ENCODE measurements at regions of chr17 and their contacts with region 1.

Region 1: DNA sequence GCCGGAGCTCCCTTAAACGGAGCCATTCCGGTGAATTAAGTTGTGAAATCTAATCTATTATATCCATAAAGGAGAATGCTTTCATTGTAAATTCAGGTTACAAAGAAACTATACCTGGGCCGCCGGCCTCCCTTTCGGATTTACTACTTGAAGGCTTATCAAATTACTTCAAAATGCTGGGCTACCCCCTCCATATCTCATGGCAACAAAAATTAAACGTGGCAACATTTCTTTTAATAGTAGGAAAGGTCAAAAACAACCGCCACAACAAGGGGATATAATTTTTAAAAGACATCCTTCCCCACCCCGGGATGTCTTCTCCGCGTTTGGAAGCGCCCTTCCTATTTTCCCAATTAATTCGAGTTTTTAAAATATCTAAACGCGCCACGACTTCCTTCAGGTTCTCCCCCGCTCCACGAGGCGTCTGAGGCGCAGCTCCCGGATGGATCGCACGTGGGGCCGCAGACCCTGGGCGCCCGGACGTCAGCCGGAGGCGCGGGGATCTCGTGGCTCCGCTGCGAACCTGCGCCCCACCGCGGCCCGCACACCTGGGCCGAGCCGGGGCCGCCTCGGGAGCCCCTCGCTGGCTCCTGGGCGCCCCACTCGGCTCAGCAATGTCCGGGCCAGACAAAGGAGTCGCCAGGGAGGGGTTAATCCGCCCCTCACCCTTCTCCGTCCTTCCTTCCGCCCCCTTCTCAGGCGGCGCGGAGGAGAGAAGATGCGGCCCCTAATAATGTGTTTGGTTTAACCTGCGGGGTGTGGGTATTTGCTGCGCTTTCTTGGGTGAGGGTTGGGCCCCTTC is 47.4 kb upstream of the SLC38A10 start:
- DNase-seq: peak in 1 of 2 experiments; percentile 69
- H3K4me3 ChIP-seq: peak overlapping the region; percentile 71 to 84 (median 71)
- H3K27ac ChIP-seq: no peak overlapping the region
- H3K4me1 ChIP-seq: peaks cover 0 to 46% (median 22%) of the 10 kb centered on the region in 4 experiments; a peak in 6 of 7 replicates
- H3K27me3 ChIP-seq: peaks cover 36 to 73% (median 62%) of the 10 kb centered on the region in 4 experiments
- CTCF ChIP-seq: 0 out of 4 replicates have a peak, but pooled peaks of 1 of the 3 experiments have one; percentile 3
- EP300 ChIP-seq: no peak
- POLR2A ChIP-seq: no peak
- RAD21 ChIP-seq: no peak

Region 2: DNA sequence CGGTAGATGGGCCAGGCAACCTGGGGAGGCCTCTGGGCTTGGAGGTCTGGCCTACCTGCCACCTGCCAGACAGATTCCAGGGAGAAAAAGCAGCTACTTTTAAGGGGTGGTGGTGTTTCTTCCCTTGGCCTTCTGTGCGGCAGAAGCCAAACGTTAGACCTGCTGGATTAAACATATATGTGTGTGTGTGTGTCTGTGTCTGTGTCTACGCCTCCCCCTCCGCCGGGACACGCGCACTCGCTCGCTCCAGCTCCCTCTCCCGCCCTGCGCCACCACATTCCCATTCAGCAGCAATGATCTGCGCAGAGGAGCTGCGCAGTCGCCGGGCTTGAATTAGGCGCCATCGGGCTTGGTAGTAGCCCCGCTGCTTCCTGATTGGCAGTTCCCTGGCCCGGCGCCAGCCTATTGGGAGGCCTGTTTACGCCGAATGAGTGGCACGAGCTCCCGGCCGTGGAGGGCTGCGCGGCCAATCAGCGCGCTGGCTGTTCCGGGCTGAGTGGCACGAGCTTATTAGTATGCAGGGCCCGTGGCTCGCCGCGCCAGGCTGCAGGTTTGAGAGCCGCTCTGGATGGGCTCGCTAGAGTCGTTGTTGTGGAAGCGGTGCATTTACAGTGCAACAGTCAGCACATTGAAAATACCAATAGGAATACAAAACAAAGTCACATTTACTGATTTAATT is 52.6 kb after region 1 on chr17 and contains the start of gene BAHCC1:
- CTCF ChIA-PET with region 1: interaction called, 3 read pairs
- POLR2A ChIA-PET with region 1: interaction called, 11 read pairs
- DNase-seq: peak; percentile 95 to 97
- H3K4me3 ChIP-seq: peak within 1 kb of the TSS; percentile 37 to 65 (median 47)
- H3K27ac ChIP-seq: no peak within 1 kb of the TSS
- H3K4me1 ChIP-seq: peaks cover 6 to 33% (median 27%) of the 10 kb centered on the region in 4 experiments
- H3K27me3 ChIP-seq: peaks cover 43 to 62% (median 55%) of the 10 kb centered on the region in 4 experiments; a peak in 6 of 7 replicates
- CTCF ChIP-seq: 0 out of 4 replicates have a peak, but pooled peaks of 1 of the 3 experiments have one; percentile 1
- EP300 ChIP-seq: no peak
- POLR2A ChIP-seq: no peak
- RAD21 ChIP-seq: no peak
- total RNA-seq, gene BAHCC1: 0.58 and 0.71 TPM in 2 replicates